Activated naive CD4-positive, alpha-beta T cell treated with anti-CD3 and anti-CD28 coated beads for 36 hours (primary cell): ENCODE measurements at regions of chr12 and their contacts with region 1.

Region 1: DNA sequence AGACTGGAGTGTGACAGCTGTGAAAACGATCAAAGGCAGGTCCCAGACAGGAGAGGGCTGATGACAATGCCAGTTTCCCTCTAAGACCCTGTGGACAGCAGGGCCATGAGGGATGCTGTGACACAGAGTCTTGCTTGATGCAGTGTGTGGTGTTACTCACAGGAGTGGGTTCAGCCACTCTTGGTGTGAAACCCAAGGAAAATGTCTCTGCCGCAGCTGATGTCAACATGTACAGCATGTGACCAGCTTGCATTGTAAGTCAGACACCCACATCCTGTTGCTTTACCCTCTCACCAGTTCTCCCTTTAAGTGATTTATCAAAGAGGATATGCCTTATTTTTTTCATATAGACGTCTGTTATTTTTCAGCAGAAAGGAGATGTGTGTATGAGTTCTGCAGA is 268.6 kb downstream of the BTG1 start:
- DNase-seq: peak; percentile 94
- H3K4me3 Mint-ChIP-seq: peak overlapping the region; percentile 67
- H3K27ac Mint-ChIP-seq: peak overlapping the region; percentile 94
- H3K4me1 Mint-ChIP-seq: peaks cover 67% of the 10 kb centered on the region
- H3K27me3 Mint-ChIP-seq: no peaks in the 10 kb centered on the region

Region 2: DNA sequence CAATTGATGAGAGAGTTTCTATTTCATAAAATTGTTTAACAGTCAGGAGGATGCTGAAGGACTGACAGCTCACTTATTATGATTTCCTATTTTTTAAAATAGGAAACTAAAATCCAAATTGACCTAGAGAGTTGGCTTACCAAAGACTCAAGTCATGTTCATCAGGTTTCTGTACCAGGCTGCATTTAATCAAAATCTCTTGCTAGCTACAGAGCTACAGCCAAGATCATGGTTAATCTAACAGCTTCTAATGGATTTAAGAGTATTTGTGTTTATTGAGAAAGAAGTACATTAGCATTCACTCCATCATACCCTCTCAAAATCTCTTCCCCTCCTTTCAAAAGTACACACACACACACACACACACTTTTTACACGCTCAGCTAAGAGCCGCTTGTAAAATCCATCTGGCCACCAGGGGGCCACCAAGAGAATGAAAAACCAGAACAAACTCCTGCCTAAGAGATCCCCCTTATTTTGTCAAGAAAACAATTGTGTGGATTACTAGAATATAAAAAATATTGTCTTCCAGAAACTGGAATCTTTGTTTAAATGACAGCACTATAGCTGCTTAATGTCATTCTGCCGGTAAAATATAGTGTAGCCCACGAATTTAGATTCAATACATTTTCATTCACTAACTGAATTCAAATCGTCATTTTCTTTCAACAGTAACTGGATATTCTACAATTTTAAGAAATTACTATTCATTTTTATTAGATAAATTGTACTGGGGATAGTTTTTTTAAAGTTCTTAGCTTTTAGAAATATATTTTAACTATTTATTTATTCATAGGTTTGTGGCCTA is 65.3 kb before region 1 on chr12:
- CTCF ChIA-PET with region 1: interaction called, 4 read pairs
- intact Hi-C with region 1: loop called (anchors 1 kb)
- DNase-seq: peak; percentile 86
- H3K4me3 Mint-ChIP-seq: peak overlapping the region; percentile 23
- H3K27ac Mint-ChIP-seq: peak overlapping the region; percentile 76
- H3K4me1 Mint-ChIP-seq: peaks cover 21% of the 10 kb centered on the region
- H3K27me3 Mint-ChIP-seq: no peaks in the 10 kb centered on the region

Region 3: GRCh38 chr12:92034858-92035401 is 157.9 kb after region 1 on chr12:
- CTCF ChIA-PET with region 1: no interaction called
- intact Hi-C with region 1: loop called (anchors 10 kb)
- DNase-seq: peak; percentile 86
- H3K4me3 Mint-ChIP-seq: peak overlapping the region; percentile 78
- H3K27ac Mint-ChIP-seq: peak overlapping the region; percentile 93
- H3K4me1 Mint-ChIP-seq: peaks cover 83% of the 10 kb centered on the region
- H3K27me3 Mint-ChIP-seq: no peaks in the 10 kb centered on the region

Region 4: GRCh38 chr12:92136965-92137721 is 260.1 kb after region 1 on chr12:
- CTCF ChIA-PET with region 1: no interaction called
- intact Hi-C with region 1: loop called (anchors 2 kb)
- DNase-seq: no peak
- H3K4me3 Mint-ChIP-seq: peak overlapping the region; percentile 100
- H3K27ac Mint-ChIP-seq: peak overlapping the region; percentile 99
- H3K4me1 Mint-ChIP-seq: peaks cover 58% of the 10 kb centered on the region
- H3K27me3 Mint-ChIP-seq: no peaks in the 10 kb centered on the region

Region 5: DNA sequence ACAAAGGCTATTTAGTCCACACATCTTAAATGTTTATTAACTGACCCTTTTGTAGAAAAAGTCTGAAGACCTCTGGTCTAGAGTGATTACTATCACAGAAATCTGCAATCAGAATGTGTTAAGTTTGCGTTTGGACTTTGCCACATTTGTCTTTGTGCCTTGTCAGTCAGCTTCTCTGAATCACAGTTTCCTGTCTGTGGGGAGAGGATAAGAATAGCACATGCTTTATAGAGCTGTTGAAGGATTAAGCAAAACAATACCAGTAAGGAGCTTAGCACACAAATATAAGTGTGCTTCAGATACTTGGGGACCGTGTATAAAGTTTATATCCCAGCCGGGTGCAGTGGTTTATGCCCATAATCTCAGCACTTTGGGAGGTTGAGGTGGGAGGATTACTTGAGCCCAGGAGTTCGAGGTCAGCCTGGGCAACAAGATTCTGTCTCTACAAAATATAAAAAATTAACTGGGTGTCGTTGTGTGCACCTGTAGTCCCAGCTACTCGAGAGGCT is 331.6 kb after region 1 on chr12:
- CTCF ChIA-PET with region 1: no interaction called
- intact Hi-C with region 1: loop called (anchors 1 kb)
- DNase-seq: peak; percentile 42
- H3K4me3 Mint-ChIP-seq: peak overlapping the region; percentile 66
- H3K27ac Mint-ChIP-seq: peak overlapping the region; percentile 86
- H3K4me1 Mint-ChIP-seq: peaks cover 45% of the 10 kb centered on the region
- H3K27me3 Mint-ChIP-seq: no peaks in the 10 kb centered on the region

Region 6: GRCh38 chr12:92469837-92470236 is 592.8 kb after region 1 on chr12:
- CTCF ChIA-PET with region 1: no interaction called
- intact Hi-C with region 1: loop called (anchors 5 kb)
- DNase-seq: no peak
- H3K4me3 Mint-ChIP-seq: no peak overlapping the region
- H3K27ac Mint-ChIP-seq: peak overlapping the region; percentile 89
- H3K4me1 Mint-ChIP-seq: peaks cover 49% of the 10 kb centered on the region
- H3K27me3 Mint-ChIP-seq: no peaks in the 10 kb centered on the region

Region 7: DNA sequence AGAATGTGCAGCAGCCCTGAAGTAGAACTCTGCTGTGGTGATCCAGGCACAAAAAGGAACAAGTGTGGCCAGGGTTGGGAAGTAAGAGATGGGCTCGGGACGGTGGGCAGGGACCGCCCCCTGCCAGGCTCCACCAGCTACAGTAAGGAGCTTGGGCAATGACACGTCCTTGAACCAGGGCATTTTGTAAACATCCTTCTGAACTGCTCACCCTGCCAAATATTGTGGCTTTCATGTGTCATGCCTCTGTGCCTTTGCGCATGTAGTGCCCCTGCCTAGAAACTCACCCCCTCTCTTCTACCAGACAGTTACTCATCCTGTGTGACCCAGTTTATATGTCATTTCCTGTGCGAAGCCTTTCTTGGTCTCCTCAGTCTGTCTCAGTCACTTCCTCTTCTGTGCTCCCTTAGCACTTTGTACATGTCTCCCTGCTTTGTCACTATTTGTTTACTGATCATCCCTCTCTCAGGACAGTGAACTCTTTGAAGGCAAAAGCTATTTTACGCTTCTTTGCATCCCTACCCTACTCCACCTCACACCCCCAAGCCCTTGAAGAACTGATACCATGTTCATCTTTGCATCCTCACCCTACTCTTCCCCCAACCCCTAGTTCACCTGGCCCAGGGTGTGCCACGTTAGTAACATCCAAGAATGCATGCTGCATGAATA is 716.8 kb after region 1 on chr12:
- CTCF ChIA-PET with region 1: no interaction called
- intact Hi-C with region 1: loop called (anchors 2 kb)
- DNase-seq: peak; percentile 87
- H3K4me3 Mint-ChIP-seq: peak overlapping the region; percentile 55
- H3K27ac Mint-ChIP-seq: peak overlapping the region; percentile 96
- H3K4me1 Mint-ChIP-seq: peaks cover 78% of the 10 kb centered on the region
- H3K27me3 Mint-ChIP-seq: no peaks in the 10 kb centered on the region